Activated CD4-positive, alpha-beta T cell treated with anti-CD3 and anti-CD28 coated beads for 36 hours (primary cell): ENCODE measurements at regions of chr9 and their contacts with region 1.

Region 1: DNA sequence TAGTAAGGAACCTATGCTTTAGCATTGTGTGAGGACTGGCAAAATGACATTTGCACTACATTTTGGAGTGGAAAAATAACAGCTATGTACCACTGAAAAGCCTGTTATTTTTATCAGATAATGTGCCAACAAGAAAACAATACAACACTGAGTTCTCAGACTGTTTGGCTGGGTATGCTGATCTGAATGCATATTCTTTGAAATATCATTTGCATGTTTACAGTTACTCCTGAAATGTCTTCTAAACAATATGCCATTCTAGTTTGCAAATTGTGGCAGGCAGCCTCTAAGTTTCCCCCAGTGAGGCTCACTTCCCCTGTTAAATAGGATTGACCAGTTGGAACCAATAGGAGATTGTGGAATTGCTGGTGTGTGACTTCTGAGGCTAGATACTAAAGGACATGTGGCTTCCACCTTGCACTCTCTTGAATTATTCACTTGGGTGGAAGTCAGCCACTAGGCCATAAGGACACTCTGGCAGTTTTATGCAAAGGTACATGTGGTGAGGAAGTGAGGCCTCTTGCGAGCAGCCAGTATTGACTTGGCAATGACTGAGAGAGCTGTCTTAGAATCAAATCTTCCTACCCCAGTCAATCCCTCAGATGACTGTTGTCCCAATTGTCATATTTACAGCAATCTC is 250.4 kb upstream of the PCSK5 start:
- DNase-seq: no peak
- ATAC-seq: no peak
- H3K4me3 Mint-ChIP-seq: no peak overlapping the region
- H3K27ac Mint-ChIP-seq: no peak overlapping the region
- H3K4me1 Mint-ChIP-seq: no peaks in the 10 kb centered on the region
- H3K27me3 Mint-ChIP-seq: no peaks in the 10 kb centered on the region

Region 2: GRCh38 chr9:75265525-75265972 is 374.5 kb before region 1 on chr9:
- CTCF ChIA-PET with region 1: no interaction called
- POLR2A ChIA-PET with region 1: no interaction called
- intact Hi-C with region 1: no loop called
- DNase-seq: peak; percentile 69
- ATAC-seq: peak; percentile 60
- H3K4me3 Mint-ChIP-seq: no peak overlapping the region
- H3K27ac Mint-ChIP-seq: no peak overlapping the region
- H3K4me1 Mint-ChIP-seq: no peaks in the 10 kb centered on the region
- H3K27me3 Mint-ChIP-seq: no peaks in the 10 kb centered on the region

Region 3: GRCh38 chr9:75653750-75654149 is 13.7 kb after region 1 on chr9:
- CTCF ChIA-PET with region 1: no interaction called
- POLR2A ChIA-PET with region 1: no interaction called
- intact Hi-C with region 1: loop called in 1 of 2 experiments (anchors 1 kb)
- DNase-seq: no peak
- ATAC-seq: no peak
- H3K4me3 Mint-ChIP-seq: no peak overlapping the region
- H3K27ac Mint-ChIP-seq: no peak overlapping the region
- H3K4me1 Mint-ChIP-seq: no peaks in the 10 kb centered on the region
- H3K27me3 Mint-ChIP-seq: peaks cover 12% of the 10 kb centered on the region